Activated naive CD4-positive, alpha-beta T cell treated with anti-CD3 and anti-CD28 coated beads for 36 hours (primary cell): ENCODE measurements at regions of chr12 and their contacts with region 1.

Region 1: GRCh38 chr12:114508529-114509129 is 102.7 kb upstream of the TBX5 start:
- DNase-seq: peak; percentile 82
- H3K4me3 Mint-ChIP-seq: no peak overlapping the region
- H3K27ac Mint-ChIP-seq: no peak overlapping the region
- H3K4me1 Mint-ChIP-seq: peaks cover 2% of the 10 kb centered on the region
- H3K27me3 Mint-ChIP-seq: peaks cover 31% of the 10 kb centered on the region

Region 2: DNA sequence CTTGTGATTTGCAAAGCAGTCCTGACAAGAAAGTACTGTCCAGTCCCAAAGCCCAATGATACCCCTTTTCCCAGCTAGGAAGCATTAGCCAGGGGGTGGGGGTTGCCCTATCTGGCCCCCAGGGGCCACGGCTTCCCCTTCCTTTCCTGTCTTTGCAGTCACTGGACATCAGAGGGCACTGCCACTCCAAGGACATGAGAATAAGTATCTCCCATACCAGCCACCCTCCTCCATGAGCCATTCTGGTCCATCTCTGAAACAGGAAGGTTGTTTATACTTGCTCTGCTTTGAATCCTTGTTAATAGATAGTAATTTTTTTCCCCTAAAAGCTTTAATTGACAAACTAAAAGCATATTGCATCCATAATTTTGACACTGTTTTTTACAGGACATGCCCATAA is 572.2 kb before region 1 on chr12:
- CTCF ChIA-PET with region 1: no interaction called
- intact Hi-C with region 1: loop called (anchors 1 kb)
- DNase-seq: no peak
- H3K4me3 Mint-ChIP-seq: no peak overlapping the region
- H3K27ac Mint-ChIP-seq: no peak overlapping the region
- H3K4me1 Mint-ChIP-seq: no peaks in the 10 kb centered on the region
- H3K27me3 Mint-ChIP-seq: no peaks in the 10 kb centered on the region

Region 3: GRCh38 chr12:113965951-113966797 is 542.5 kb before region 1 on chr12 and contains the start of gene RBM19:
- CTCF ChIA-PET with region 1: interaction called, 4 read pairs
- intact Hi-C with region 1: loop called (anchors 1 kb)
- DNase-seq: peak; percentile 98
- H3K4me3 Mint-ChIP-seq: peak within 1 kb of the TSS; percentile 100
- H3K27ac Mint-ChIP-seq: peak within 1 kb of the TSS; percentile 91
- H3K4me1 Mint-ChIP-seq: peaks cover 52% of the 10 kb centered on the region
- H3K27me3 Mint-ChIP-seq: no peaks in the 10 kb centered on the region
- total RNA-seq, gene RBM19: 89.0 to 96.2 TPM

Region 4: DNA sequence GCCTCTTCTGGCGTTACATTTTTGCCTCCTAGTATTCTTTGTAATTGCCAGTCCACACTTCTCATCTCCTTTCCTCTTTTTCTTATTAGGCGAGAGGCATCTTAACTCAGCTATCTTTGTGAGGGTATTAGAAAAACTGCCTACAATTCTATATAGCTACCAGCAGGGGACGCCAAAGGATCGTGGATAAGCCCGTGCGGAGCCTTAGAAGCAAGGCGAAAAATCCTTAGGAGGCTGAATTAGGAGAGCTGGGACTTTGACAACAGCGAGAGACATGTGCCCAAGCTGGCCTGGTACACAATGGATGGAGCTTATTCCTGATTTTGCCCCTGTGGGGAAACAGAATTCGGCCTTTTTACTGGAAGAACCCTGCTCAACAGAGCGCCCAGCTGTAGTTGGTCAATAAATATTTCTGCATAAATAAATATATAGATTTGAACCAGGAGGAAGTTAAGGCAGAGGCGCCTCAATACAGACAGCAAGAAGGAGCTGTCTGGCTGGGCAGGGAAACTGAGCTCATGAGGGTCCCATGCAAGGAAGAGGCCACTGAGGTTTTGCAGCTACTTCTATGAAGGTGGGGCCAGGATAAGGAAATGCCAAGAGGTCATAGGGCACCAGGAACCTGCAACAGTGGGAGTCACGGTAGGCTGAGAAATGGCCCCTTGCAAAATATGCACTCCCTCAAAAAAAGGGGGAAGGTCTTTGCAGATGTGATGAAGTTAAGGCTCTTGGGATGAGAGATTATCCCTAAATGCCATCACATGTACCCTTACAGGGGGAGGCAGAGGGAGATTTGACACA is 527.9 kb before region 1 on chr12:
- CTCF ChIA-PET with region 1: interaction called, 51 read pairs
- intact Hi-C with region 1: loop called (anchors 1 kb)
- DNase-seq: peak; percentile 46
- H3K4me3 Mint-ChIP-seq: no peak overlapping the region
- H3K27ac Mint-ChIP-seq: no peak overlapping the region
- H3K4me1 Mint-ChIP-seq: no peaks in the 10 kb centered on the region
- H3K27me3 Mint-ChIP-seq: peaks cover 27% of the 10 kb centered on the region

Region 5: DNA sequence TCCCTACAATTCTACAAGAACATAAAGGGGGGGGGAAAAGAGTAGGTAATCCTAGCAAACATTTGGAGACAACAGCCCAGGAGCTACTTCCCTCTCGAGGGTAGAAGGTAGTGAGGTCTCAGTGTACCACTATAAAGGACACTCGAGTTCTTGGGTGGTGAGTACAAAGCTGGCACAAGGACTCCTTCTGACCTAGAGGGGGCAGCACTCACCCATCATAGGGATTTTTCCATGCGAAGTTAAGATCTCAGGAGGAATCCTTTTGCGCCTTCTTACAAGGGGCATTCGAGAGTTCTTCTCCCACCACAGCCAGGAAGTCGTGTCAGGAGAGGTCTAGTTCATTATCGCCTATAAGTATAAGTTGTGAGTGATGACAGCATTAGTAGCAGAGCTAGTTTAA is 342.3 kb before region 1 on chr12:
- CTCF ChIA-PET with region 1: no interaction called
- intact Hi-C with region 1: loop called (anchors 10 kb)
- DNase-seq: peak; percentile 17
- H3K4me3 Mint-ChIP-seq: no peak overlapping the region
- H3K27ac Mint-ChIP-seq: no peak overlapping the region
- H3K4me1 Mint-ChIP-seq: no peaks in the 10 kb centered on the region
- H3K27me3 Mint-ChIP-seq: no peaks in the 10 kb centered on the region

Region 6: DNA sequence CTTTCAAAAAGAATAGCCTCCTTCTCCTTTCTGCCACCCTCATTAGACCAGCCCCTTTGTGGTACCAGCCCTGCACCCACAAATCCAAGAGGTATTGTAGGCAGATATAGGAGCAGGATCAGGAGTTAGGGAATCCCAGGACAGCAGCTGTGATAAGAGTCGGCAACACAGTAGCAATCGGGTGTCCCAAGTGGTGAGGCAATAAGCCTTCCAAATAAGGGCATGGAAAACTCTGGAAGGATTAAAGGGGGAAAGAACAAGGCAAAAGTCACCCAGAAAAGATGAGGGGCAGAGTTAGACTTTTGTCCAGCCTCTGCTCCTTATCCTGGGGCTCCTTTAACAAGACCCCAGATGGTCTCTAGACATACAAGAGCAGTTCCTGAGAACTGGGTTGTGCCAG is 306.8 kb before region 1 on chr12:
- CTCF ChIA-PET with region 1: no interaction called
- intact Hi-C with region 1: no loop called
- DNase-seq: no peak
- H3K4me3 Mint-ChIP-seq: no peak overlapping the region
- H3K27ac Mint-ChIP-seq: no peak overlapping the region
- H3K4me1 Mint-ChIP-seq: no peaks in the 10 kb centered on the region
- H3K27me3 Mint-ChIP-seq: no peaks in the 10 kb centered on the region

Region 7: GRCh38 chr12:114444422-114445279 is 64.0 kb before region 1 on chr12:
- CTCF ChIA-PET with region 1: no interaction called
- intact Hi-C with region 1: no loop called
- DNase-seq: no peak
- H3K4me3 Mint-ChIP-seq: no peak overlapping the region
- H3K27ac Mint-ChIP-seq: no peak overlapping the region
- H3K4me1 Mint-ChIP-seq: no peaks in the 10 kb centered on the region
- H3K27me3 Mint-ChIP-seq: peaks cover 78% of the 10 kb centered on the region